Heart left ventricle (tissue), 16 donors: ENCODE measurements at regions of chr22 and their contacts with region 1.

Region 1: GRCh38 chr22:45553351-45554039 is 50.8 kb downstream of the FBLN1 start:
- DNase-seq: peak; percentile 74 to 86 (median 77)
- ATAC-seq: peak; percentile 32 to 61 (median 52)
- H3K4me3 ChIP-seq: no peak overlapping the region
- H3K27ac ChIP-seq: peak overlapping the region; percentile 57 to 86 (median 72)
- H3K4me1 ChIP-seq: peaks cover 0 to 54% (median 31%) of the 10 kb centered on the region in 12 donors
- H3K27me3 ChIP-seq: peaks cover 0 to 3% (median 0%) of the 10 kb centered on the region in 9 donors
- CTCF ChIP-seq: peak; percentile 79 to 94 (median 88)
- POLR2A ChIP-seq: no peak

Region 2: DNA sequence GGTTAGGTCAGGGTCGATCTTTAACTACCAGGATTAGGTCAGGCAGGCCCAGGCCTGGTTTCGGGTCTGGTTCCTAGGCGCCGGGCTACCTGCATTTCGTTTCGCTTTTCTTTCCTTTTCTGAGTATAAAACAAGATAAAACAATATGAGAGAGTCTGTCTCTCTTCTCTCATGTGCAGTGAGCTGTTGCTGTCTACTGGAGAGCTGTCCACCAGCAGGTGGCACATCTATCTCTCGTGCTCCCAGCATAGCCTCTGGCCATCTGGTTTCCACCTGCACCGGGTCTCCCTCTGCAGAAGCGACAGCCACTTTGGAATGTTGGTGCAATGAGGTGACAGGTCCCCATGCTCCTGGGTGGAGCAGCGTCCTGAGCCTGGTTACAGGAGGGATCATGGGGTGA is 112.4 kb before region 1 on chr22:
- intact Hi-C with region 1: loop called (anchors 1 to 2 kb)
- DNase-seq: peak in 4 of 5 donors; percentile 43 to 78 (median 62)
- ATAC-seq: peak; percentile 57 to 92 (median 89)
- H3K4me3 ChIP-seq: no peak overlapping the region
- H3K27ac ChIP-seq: no peak overlapping the region
- H3K4me1 ChIP-seq: peaks cover 0 to 6% (median 0%) of the 10 kb centered on the region in 12 donors
- H3K27me3 ChIP-seq: peaks cover 0 to 11% (median 0%) of the 10 kb centered on the region in 9 donors
- CTCF ChIP-seq: peak; percentile 40 to 76 (median 62)
- POLR2A ChIP-seq: no peak

Region 3: GRCh38 chr22:45502215-45503049 is 51.1 kb before region 1 on chr22 and contains the start of gene FBLN1:
- intact Hi-C with region 1: loop called in 1 of 10 experiments (anchors 5 kb)
- DNase-seq: peak; percentile 44 to 69 (median 57)
- ATAC-seq: peak in 2 of 4 donors; percentile 55 to 74
- H3K4me3 ChIP-seq: peak within 1 kb of the TSS; percentile 35 to 72 (median 60)
- H3K27ac ChIP-seq: peak within 1 kb of the TSS in 11 of 12 donors; percentile 23 to 84 (median 73)
- H3K4me1 ChIP-seq: peaks cover 0 to 42% (median 6%) of the 10 kb centered on the region in 12 donors
- H3K27me3 ChIP-seq: peaks cover 0 to 41% (median 20%) of the 10 kb centered on the region in 9 donors
- CTCF ChIP-seq: peak in 5 of 12 donors; percentile 16 to 37 (median 27)
- POLR2A ChIP-seq: no peak
- total RNA-seq, gene FBLN1: 30.0 to 239 (median 50.3) TPM

Region 4: GRCh38 chr22:45511847-45512281 is 41.6 kb before region 1 on chr22:
- intact Hi-C with region 1: loop called in 1 of 10 experiments (anchors 5 kb)
- DNase-seq: peak; percentile 70 to 85 (median 78)
- ATAC-seq: peak; percentile 74 to 93 (median 88)
- H3K4me3 ChIP-seq: no peak overlapping the region
- H3K27ac ChIP-seq: peak overlapping the region; percentile 23 to 77 (median 62)
- H3K4me1 ChIP-seq: peaks cover 0 to 65% (median 15%) of the 10 kb centered on the region in 12 donors
- H3K27me3 ChIP-seq: peaks cover 0 to 3% (median 0%) of the 10 kb centered on the region in 9 donors
- CTCF ChIP-seq: no peak
- POLR2A ChIP-seq: no peak